ENCODE measurements at regions of chr5 and their contacts with region 1.

Region 1: DNA sequence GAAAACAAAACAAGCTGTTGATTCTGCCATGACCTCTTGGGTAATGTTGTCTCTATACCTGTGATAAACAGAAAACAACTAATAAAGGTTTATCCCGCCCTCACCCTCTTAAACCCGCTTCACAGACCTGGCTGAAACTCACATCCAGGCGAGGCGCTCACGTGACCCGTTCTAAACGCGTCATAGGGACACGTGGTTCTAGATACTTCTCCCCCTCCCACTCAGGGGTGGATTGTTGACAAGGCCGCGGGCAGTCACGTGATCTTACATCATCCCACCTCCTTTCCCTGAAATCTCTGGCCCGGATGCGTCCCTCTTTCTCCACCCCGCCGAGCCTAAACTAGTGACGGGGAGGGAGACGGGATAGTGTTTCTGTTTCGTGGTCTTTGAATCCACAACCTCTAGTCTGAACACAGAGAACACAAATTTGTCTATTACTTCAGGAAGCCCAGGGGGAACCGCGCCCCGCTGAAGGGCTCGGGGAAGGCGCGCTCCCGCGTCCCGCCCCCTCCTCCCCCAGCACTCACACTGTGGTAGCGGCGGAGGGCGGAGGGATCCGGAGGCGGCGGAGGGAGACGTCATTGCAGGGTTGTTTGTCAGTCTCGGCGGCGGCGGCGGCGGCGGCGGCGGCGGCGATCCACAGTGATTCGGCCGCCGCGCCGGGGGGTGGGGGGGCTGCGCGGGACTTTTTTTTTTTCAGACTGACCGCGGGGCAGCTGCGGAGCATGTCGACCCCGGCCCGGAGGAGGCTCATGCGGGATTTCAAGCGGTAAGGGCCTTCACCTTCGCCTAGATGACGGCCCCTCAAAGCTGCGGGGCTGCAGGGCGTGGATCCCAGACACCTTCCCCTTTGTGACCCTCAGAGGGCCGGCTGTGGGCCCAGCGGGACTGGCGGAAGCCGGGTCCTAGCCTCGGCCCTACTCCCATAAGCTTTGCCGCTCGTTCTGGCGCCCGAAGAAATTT is at the start of gene UBE2B:
- DNase-seq: peak; percentile 98
- ATAC-seq: peak; percentile 72
- H3K4me3 Mint-ChIP-seq: peak within 1 kb of the TSS; percentile 99
- H3K27ac Mint-ChIP-seq: peak within 1 kb of the TSS; percentile 99
- H3K4me1 Mint-ChIP-seq: peaks cover 53% of the 10 kb centered on the region
- H3K27me3 Mint-ChIP-seq: no peaks in the 10 kb centered on the region
- total RNA-seq, gene UBE2B: 112 to 115 TPM

Region 2: GRCh38 chr5:134086943-134087305 is 284.2 kb before region 1 on chr5:
- CTCF ChIA-PET with region 1: no interaction called
- POLR2A ChIA-PET with region 1: no interaction called
- intact Hi-C with region 1: no loop called
- DNase-seq: peak; percentile 90
- ATAC-seq: peak; percentile 87
- H3K4me3 Mint-ChIP-seq: peak overlapping the region; percentile 46
- H3K27ac Mint-ChIP-seq: peak overlapping the region; percentile 93
- H3K4me1 Mint-ChIP-seq: peaks cover 84% of the 10 kb centered on the region
- H3K27me3 Mint-ChIP-seq: peaks cover 1% of the 10 kb centered on the region

Region 3: DNA sequence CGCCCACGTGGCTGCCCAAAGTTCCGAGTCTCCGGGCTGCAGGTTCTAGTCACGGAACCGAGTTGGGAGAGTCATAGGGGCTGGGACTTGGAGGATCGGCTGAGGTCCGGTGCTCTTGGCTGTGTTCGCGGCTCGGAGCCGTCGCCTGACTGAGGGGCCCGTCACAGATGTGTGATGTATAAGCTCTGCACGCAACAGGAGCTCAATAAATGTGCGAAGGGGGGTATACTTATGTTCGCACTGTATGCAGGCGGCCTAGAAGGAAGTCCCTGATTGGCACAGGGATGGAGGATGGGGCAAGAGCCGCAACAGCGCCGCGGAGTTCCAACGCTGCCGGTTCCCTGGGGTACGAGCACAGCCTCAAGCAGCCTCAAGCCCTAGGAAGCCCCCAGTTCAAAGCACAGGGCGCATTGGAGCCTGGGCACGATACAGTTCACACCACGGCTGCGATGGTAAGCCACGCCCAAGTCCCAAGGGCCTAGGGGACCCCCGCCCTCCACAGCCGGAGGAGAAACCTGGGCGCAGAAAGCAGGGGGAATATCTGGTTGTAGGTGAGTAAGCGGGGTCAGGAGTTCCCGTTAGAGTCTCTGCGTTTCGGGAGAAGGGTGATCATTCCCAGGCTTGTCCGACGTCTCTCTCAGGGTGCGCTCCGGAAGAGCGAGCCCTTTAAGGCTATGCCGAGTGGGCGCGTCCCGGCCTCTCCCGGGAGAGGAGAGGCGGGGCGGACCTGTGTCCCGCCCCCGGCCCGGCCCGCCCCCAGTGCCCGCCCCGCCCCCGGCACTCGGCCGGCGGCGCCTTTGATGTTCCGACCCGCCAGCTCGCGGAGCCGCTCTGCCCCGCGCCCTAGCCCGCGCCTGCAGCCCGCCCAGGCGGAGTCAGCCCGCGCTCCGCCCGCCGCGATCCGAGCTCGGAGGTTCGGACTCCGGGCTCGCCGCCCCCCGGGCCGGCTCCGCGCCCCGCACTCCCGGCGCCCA is 257.0 kb before region 1 on chr5 and contains the start of gene TCF7:
- CTCF ChIA-PET with region 1: no interaction called
- POLR2A ChIA-PET with region 1: no interaction called
- intact Hi-C with region 1: loop called in 1 of 2 experiments (anchors 2 kb)
- DNase-seq: peak; percentile 88
- ATAC-seq: peak; percentile 40
- H3K4me3 Mint-ChIP-seq: peak within 1 kb of the TSS; percentile 85
- H3K27ac Mint-ChIP-seq: peak within 1 kb of the TSS; percentile 97
- H3K4me1 Mint-ChIP-seq: peaks cover 61% of the 10 kb centered on the region
- H3K27me3 Mint-ChIP-seq: no peaks in the 10 kb centered on the region
- total RNA-seq, gene TCF7: 94.8 to 117 TPM

Region 4: GRCh38 chr5:134304311-134304710 is 66.8 kb before region 1 on chr5:
- CTCF ChIA-PET with region 1: interaction called, 5 read pairs
- POLR2A ChIA-PET with region 1: no interaction called
- intact Hi-C with region 1: loop called in 1 of 2 experiments (anchors 5 kb)
- DNase-seq: no peak
- ATAC-seq: no peak
- H3K4me3 Mint-ChIP-seq: no peak overlapping the region
- H3K27ac Mint-ChIP-seq: no peak overlapping the region
- H3K4me1 Mint-ChIP-seq: no peaks in the 10 kb centered on the region
- H3K27me3 Mint-ChIP-seq: no peaks in the 10 kb centered on the region

Region 5: DNA sequence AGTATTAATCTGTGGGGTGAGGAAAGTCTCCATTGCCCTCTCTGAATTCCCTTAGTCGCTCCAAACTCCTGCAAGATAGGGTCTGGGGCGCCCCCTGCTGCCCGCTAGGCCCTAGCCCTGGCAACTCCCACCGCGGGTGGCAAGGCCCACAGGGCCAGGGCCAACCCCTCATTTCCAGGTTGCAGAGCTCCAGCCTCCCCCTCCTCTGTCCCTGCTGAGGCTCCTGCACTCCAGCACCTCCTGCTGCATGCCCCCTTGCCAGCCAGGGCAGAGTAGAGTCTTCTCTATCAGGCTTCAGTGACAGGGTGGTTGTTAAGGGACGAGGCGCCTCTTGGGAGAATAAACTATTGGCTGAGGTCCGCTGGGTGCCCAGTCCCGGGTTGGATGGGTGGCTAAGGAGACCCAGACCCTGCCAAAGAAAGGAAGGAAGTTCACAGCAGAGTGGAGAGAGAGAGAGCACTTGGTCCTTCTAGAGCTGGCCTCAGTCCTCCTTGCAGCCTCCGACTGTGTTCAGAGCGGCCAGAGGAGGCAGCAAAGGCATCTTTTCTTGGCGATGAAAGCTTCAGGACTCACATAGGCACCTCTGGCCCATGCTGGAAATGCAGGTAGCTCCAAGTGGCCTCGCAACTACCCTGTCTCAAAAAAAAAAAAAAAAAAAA is 215.8 kb after region 1 on chr5:
- CTCF ChIA-PET with region 1: interaction called, 6 read pairs
- POLR2A ChIA-PET with region 1: no interaction called
- intact Hi-C with region 1: loop called in 1 of 2 experiments (anchors 2 kb)
- DNase-seq: peak; percentile 95
- ATAC-seq: peak; percentile 91
- H3K4me3 Mint-ChIP-seq: no peak overlapping the region
- H3K27ac Mint-ChIP-seq: peak overlapping the region; percentile 78
- H3K4me1 Mint-ChIP-seq: peaks cover 14% of the 10 kb centered on the region
- H3K27me3 Mint-ChIP-seq: no peaks in the 10 kb centered on the region

Region 6: DNA sequence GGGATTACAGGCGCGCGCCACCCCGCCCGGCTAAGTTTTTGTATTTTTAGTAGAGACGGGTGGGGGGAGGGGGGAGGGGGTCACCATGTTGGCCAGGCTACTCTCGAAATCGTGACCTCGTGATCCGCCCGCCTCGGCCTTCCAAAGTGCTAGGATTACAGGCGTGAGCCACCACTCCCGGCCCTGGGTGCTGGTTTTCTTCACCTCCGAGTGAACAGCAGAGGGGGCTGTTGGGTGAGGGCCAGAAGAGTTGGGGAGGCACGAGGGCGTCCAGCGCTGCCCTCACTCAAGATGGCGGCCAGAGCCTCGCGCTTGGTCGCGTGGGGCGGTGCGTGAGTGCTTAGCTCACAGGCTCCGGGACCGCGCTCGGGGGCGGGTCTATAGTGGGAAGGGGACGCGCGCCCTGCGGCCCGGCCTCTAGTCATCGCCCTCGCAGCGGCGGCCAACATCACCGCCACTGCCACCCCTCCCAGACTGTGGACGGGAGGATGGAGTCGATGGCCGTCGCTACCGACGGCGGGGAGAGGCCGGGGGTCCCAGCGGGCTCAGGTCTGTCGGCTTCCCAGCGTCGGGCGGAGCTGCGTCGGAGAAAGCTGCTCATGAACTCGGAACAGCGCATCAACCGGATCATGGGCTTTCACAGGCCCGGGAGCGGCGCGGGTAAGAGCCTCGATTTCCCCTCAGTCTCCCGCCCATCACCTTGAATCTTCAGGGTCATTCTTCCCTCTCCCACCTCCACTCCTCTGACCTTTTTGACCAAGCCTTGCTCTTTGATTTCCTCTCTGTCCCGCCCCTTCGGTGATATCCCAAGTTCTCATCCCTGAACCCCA is 367.2 kb after region 1 on chr5 and contains the start of gene CAMLG:
- CTCF ChIA-PET with region 1: no interaction called
- POLR2A ChIA-PET with region 1: no interaction called
- intact Hi-C with region 1: loop called (anchors 1 kb)
- DNase-seq: peak; percentile 99
- ATAC-seq: peak; percentile 97
- H3K4me3 Mint-ChIP-seq: peak within 1 kb of the TSS; percentile 94
- H3K27ac Mint-ChIP-seq: peak within 1 kb of the TSS; percentile 95
- H3K4me1 Mint-ChIP-seq: peaks cover 27% of the 10 kb centered on the region
- H3K27me3 Mint-ChIP-seq: no peaks in the 10 kb centered on the region
- total RNA-seq, gene CAMLG: 19.8 to 35.2 TPM

Region 7: DNA sequence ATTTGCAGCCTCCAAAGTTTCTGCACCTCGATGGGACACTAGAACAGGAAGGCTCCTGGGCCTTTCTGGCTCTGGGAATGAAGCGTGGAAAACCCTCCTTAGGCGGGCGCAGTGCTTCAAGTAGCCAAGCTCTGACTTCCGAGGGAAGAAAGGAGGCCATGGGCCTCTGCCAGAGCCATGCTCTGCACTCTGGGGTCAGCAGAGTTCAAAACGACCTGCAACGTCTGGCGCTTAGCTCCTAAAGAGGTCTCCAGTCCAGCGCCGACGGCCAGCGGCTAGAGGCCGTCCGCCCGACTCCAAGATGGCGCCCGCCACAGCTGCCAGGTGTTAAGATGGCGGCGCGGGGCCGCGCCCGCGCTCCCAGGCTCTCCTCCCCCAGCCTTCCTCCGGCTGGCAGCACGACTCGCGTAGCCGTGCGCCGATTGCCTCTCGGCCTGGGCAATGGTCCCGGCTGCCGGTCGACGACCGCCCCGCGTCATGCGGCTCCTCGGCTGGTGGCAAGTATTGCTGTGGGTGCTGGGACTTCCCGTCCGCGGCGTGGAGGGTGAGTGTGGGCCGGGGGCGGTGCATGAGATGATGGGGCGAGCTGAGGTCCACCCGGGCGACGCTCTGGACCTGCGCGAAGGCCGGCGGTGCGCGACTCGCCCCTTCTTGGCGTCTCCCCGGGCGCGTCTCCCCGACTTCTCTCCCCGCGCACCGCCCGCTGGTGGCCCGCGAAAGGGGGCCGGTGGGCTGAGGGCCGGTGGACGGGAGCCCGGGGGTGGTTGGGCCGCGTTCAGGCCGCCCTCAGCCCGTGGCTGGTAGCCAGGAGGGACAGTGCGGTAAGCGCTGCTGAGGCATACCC is 503.1 kb after region 1 on chr5 and contains the start of gene TXNDC15:
- CTCF ChIA-PET with region 1: no interaction called
- POLR2A ChIA-PET with region 1: no interaction called
- intact Hi-C with region 1: loop called in 1 of 2 experiments (anchors 1 kb)
- DNase-seq: peak; percentile 90
- ATAC-seq: peak; percentile 83
- H3K4me3 Mint-ChIP-seq: peak within 1 kb of the TSS; percentile 88
- H3K27ac Mint-ChIP-seq: peak within 1 kb of the TSS; percentile 97
- H3K4me1 Mint-ChIP-seq: peaks cover 37% of the 10 kb centered on the region
- H3K27me3 Mint-ChIP-seq: no peaks in the 10 kb centered on the region
- total RNA-seq, gene TXNDC15: 16.6 to 29.1 TPM

Measured in activated CD4-positive, alpha-beta T cell treated with anti-CD3 and anti-CD28 coated beads for 36 hours (primary cell).